CD4-positive, alpha-beta T cell (primary cell): ENCODE measurements at regions of chr18 and their contacts with region 1.

Region 1: GRCh38 chr18:3593904-3594661 is 144.1 kb downstream of the TGIF1 start:
- DNase-seq: peak; percentile 79 to 97 (median 88)
- ATAC-seq: peak; percentile 74
- H3K4me3 ChIP-seq: peak overlapping the region; percentile 59
- H3K4me3 Mint-ChIP-seq: peak overlapping the region; percentile 94
- H3K27ac ChIP-seq: peak overlapping the region; percentile 89 to 98
- H3K27ac Mint-ChIP-seq: peak overlapping the region; percentile 100
- H3K4me1 ChIP-seq: peaks cover 62% of the 10 kb centered on the region
- H3K4me1 Mint-ChIP-seq: peaks cover 59% of the 10 kb centered on the region
- H3K27me3 ChIP-seq: no peaks in the 10 kb centered on the region
- H3K27me3 Mint-ChIP-seq: no peaks in the 10 kb centered on the region
- CTCF ChIP-seq: peak; percentile 82

Region 2: DNA sequence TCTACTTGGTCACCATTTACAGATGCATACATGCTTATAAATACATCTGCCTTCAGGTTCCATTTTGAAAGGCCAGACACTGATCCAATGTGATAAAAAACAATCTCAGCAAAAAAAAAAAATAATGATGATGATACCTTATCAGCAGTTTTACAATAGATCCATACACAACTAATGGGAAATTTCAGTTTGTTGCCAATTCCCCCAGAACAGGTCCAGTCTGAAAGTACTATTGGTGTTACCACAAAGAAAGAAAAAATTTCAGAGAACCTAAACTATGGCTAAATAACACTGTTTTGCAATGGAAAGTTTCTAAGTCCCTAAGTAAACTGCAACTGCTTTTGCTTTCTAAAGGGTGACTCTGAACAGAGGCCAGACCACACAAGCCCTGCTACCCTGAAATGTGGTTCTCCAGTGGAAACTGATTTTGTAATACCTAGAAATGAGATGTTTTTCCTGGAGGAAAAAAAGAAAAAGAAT is 635.2 kb before region 1 on chr18:
- CTCF ChIA-PET with region 1: no interaction called
- POLR2A ChIA-PET with region 1: interaction called, 3 read pairs
- intact Hi-C with region 1: loop called (anchors 10 kb)
- DNase-seq: peak in 3 of 14 experiments; percentile 41 to 71 (median 47)
- ATAC-seq: no peak
- H3K4me3 ChIP-seq: no peak overlapping the region
- H3K4me3 Mint-ChIP-seq: peak overlapping the region; percentile 83
- H3K27ac ChIP-seq: peak overlapping the region; percentile 39 to 88
- H3K27ac Mint-ChIP-seq: peak overlapping the region; percentile 96
- H3K4me1 ChIP-seq: peaks cover 76% of the 10 kb centered on the region
- H3K4me1 Mint-ChIP-seq: peaks cover 95% of the 10 kb centered on the region
- H3K27me3 ChIP-seq: no peaks in the 10 kb centered on the region
- H3K27me3 Mint-ChIP-seq: no peaks in the 10 kb centered on the region
- CTCF ChIP-seq: no peak

Region 3: DNA sequence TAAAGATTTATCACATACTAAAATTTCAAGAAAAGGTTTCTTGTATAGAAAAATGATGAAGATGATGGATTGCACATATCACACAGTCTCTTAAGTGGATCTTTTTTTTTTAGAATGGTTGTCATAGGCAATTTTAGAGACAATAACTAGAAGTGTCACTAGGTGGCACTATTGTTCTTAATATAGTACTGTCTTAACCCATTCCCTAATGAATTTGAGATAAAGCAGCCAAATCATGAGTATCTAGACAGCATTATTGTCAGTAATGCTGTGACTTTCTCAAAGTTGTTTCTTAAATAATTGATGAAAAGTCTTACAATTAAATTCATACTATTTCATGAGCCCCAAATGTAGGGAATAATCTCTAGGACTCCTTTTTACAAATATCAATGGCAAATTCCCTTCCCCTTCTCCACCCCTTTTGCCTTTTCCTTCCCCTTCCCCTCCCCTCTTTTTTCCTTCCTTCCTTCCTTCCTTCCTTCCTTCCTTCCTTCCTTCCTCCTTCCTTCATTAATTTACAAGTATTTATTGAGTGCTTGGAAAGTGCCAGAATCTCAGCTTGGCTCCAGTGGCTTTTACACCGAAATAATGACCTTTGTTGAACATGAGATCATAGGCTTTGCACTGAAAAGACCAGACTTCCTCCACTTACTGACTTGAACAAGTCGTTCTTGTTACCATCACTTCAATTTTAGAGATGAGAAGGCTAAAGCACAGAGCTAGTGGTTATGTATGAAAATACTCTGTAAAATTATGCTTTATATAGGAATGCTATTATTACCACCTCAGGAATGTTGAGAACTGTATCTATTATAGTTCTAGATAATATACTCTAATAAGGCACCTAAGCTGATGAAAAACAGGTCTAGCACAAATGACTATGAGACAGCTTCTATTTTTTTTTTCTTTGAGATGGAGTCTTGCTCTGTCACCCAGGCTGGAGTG is 312.4 kb before region 1 on chr18:
- CTCF ChIA-PET with region 1: interaction called, 3 read pairs
- POLR2A ChIA-PET with region 1: interaction called, 3 read pairs
- intact Hi-C with region 1: loop called in 1 of 2 experiments (anchors 5 kb)
- DNase-seq: peak in 3 of 14 experiments; percentile 79 to 83 (median 83)
- ATAC-seq: peak; percentile 87
- H3K4me3 ChIP-seq: no peak overlapping the region
- H3K4me3 Mint-ChIP-seq: no peak overlapping the region
- H3K27ac ChIP-seq: no peak overlapping the region
- H3K27ac Mint-ChIP-seq: no peak overlapping the region
- H3K4me1 ChIP-seq: no peaks in the 10 kb centered on the region
- H3K4me1 Mint-ChIP-seq: no peaks in the 10 kb centered on the region
- H3K27me3 ChIP-seq: no peaks in the 10 kb centered on the region
- H3K27me3 Mint-ChIP-seq: no peaks in the 10 kb centered on the region
- CTCF ChIP-seq: peak; percentile 82

Region 4: DNA sequence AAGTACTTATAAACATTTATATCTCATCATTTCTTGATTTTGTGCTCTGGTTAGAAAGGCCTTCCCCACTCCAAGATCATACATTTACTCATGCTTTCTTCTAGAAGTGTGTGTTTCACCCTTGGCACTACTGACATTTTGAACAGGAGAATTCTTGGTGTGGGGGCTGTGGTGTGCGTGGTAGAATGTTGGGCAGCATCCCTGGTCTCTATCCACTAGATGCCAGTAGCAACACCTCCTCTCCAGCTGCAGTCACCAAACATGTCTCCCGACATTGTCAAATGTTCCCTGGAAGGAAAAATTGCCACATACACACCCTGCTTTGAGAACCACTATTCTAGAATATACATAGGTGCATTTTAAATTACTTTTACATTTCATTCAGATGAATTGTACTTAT is 152.8 kb before region 1 on chr18:
- CTCF ChIA-PET with region 1: interaction called, 11 read pairs
- POLR2A ChIA-PET with region 1: interaction called, 15 read pairs
- intact Hi-C with region 1: no loop called
- DNase-seq: peak in 5 of 14 experiments; percentile 2 to 69 (median 49)
- ATAC-seq: peak; percentile 46
- H3K4me3 ChIP-seq: no peak overlapping the region
- H3K4me3 Mint-ChIP-seq: no peak overlapping the region
- H3K27ac ChIP-seq: no peak overlapping the region
- H3K27ac Mint-ChIP-seq: no peak overlapping the region
- H3K4me1 ChIP-seq: no peaks in the 10 kb centered on the region
- H3K4me1 Mint-ChIP-seq: peaks cover 4% of the 10 kb centered on the region
- H3K27me3 ChIP-seq: no peaks in the 10 kb centered on the region
- H3K27me3 Mint-ChIP-seq: no peaks in the 10 kb centered on the region
- CTCF ChIP-seq: peak; percentile 51

Region 5: GRCh38 chr18:3466045-3466444 is 128.0 kb before region 1 on chr18:
- CTCF ChIA-PET with region 1: interaction called, 4 read pairs
- POLR2A ChIA-PET with region 1: interaction called, 11 read pairs
- intact Hi-C with region 1: no loop called
- DNase-seq: no peak
- ATAC-seq: no peak
- H3K4me3 ChIP-seq: no peak overlapping the region
- H3K4me3 Mint-ChIP-seq: no peak overlapping the region
- H3K27ac ChIP-seq: peak overlapping the region in 1 of 2 donors; percentile 21
- H3K27ac Mint-ChIP-seq: peak overlapping the region; percentile 16
- H3K4me1 ChIP-seq: peaks cover 11% of the 10 kb centered on the region
- H3K4me1 Mint-ChIP-seq: peaks cover 22% of the 10 kb centered on the region
- H3K27me3 ChIP-seq: no peaks in the 10 kb centered on the region
- H3K27me3 Mint-ChIP-seq: no peaks in the 10 kb centered on the region
- CTCF ChIP-seq: no peak

Region 6: GRCh38 chr18:3604498-3605408 is 10.7 kb after region 1 on chr18:
- CTCF ChIA-PET with region 1: interaction called, 35 read pairs
- POLR2A ChIA-PET with region 1: interaction called, 185 read pairs
- intact Hi-C with region 1: loop called in 1 of 2 experiments (anchors 1 kb)
- DNase-seq: peak in 5 of 14 experiments; percentile 9 to 85 (median 72)
- ATAC-seq: peak; percentile 69
- H3K4me3 ChIP-seq: peak overlapping the region; percentile 47
- H3K4me3 Mint-ChIP-seq: no peak overlapping the region
- H3K27ac ChIP-seq: peak overlapping the region; percentile 38 to 58
- H3K27ac Mint-ChIP-seq: no peak overlapping the region
- H3K4me1 ChIP-seq: peaks cover 47% of the 10 kb centered on the region
- H3K4me1 Mint-ChIP-seq: peaks cover 8% of the 10 kb centered on the region
- H3K27me3 ChIP-seq: no peaks in the 10 kb centered on the region
- H3K27me3 Mint-ChIP-seq: no peaks in the 10 kb centered on the region
- CTCF ChIP-seq: no peak